Endothelial cell of umbilical vein (primary cell): ENCODE measurements at regions of chr17 and their contacts with region 1.

Region 1: GRCh38 chr17:17496189-17497064 is at the start of gene RASD1:
- DNase-seq: peak; percentile 77
- H3K4me3 ChIP-seq: peak within 1 kb of the TSS; percentile 39 to 74 (median 71)
- H3K27ac ChIP-seq: peak within 1 kb of the TSS; percentile 71
- H3K4me1 ChIP-seq: peaks cover 13% of the 10 kb centered on the region
- H3K27me3 ChIP-seq: no peaks in the 10 kb centered on the region
- CTCF ChIP-seq: peak; percentile 79 to 93
- POLR2A ChIP-seq: peak; percentile 91
- total RNA-seq, gene RASD1: 15.7 and 21.3 TPM in 2 replicates

Region 2: GRCh38 chr17:17401271-17401781 is 95.1 kb before region 1 on chr17:
- CTCF ChIA-PET with region 1: no interaction called
- POLR2A ChIA-PET with region 1: no interaction called
- dilution Hi-C with region 1: no loop called
- intact Hi-C with region 1: loop called (anchors 5 kb)
- DNase-seq: no peak
- H3K4me3 ChIP-seq: no peak overlapping the region
- H3K27ac ChIP-seq: no peak overlapping the region
- H3K4me1 ChIP-seq: peaks cover 24% of the 10 kb centered on the region
- H3K27me3 ChIP-seq: no peaks in the 10 kb centered on the region
- CTCF ChIP-seq: peak in 1 of 2 donors; percentile 3
- POLR2A ChIP-seq: no peak

Region 3: GRCh38 chr17:17445925-17446665 is 50.3 kb before region 1 on chr17:
- CTCF ChIA-PET with region 1: interaction called, 10 read pairs
- POLR2A ChIA-PET with region 1: interaction called, 9 read pairs
- dilution Hi-C with region 1: no loop called
- intact Hi-C with region 1: loop called (anchors 1 kb)
- DNase-seq: peak; percentile 96
- H3K4me3 ChIP-seq: no peak overlapping the region
- H3K27ac ChIP-seq: peak overlapping the region; percentile 90
- H3K4me1 ChIP-seq: peaks cover 26% of the 10 kb centered on the region
- H3K27me3 ChIP-seq: peaks cover 0 to 2% of the 10 kb centered on the region in 2 experiments
- CTCF ChIP-seq: peak in 1 of 2 donors; percentile 5
- POLR2A ChIP-seq: peak; percentile 42

Region 4: GRCh38 chr17:17506811-17507464 is 10.5 kb after region 1 on chr17:
- CTCF ChIA-PET with region 1: interaction called, 37 read pairs
- POLR2A ChIA-PET with region 1: interaction called, 3 read pairs
- dilution Hi-C with region 1: no loop called
- intact Hi-C with region 1: no loop called
- DNase-seq: no peak
- H3K4me3 ChIP-seq: no peak overlapping the region
- H3K27ac ChIP-seq: no peak overlapping the region
- H3K4me1 ChIP-seq: no peaks in the 10 kb centered on the region
- H3K27me3 ChIP-seq: no peaks in the 10 kb centered on the region
- CTCF ChIP-seq: no peak
- POLR2A ChIP-seq: no peak

Region 5: DNA sequence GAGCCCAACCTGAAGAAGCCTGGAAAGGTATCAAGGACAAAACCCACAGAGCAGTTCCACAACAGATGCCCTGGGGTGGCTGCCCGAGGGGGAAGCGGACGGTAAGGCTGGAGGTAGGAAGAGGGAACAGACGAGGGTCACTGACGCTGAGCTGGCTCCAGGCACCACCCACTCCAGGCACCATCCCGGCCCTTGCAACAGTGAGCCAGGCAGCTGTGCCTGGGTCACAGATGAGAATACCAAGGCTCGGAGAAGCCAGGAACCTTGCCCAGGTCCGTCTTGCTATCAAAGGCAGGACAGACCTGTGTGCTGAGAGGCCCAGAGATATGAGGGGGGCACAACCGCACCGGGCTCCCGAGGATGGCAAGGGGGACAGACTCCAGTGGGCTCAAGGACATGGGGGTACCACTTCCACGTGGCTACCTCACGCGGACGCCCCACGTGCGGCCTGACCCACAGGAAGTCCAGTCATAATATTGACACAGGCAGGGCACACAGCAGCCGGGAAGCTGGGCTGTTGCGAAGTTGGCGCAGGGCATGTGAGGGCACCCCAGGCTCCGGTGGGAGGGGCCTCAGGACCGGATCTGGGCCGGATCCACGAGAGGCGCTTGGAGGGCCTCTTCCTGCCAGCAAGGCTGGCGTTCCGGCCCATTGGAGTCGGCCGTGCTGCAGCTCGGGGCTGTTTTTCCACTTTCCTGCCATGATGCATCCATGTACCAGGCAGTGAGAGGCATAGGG is 65.2 kb after region 1 on chr17:
- CTCF ChIA-PET with region 1: interaction called, 20 read pairs
- POLR2A ChIA-PET with region 1: interaction called, 4 read pairs
- dilution Hi-C with region 1: no loop called
- intact Hi-C with region 1: no loop called
- DNase-seq: peak; percentile 67
- H3K4me3 ChIP-seq: no peak overlapping the region
- H3K27ac ChIP-seq: peak overlapping the region; percentile 65
- H3K4me1 ChIP-seq: peaks cover 11% of the 10 kb centered on the region
- H3K27me3 ChIP-seq: no peaks in the 10 kb centered on the region
- CTCF ChIP-seq: no peak
- POLR2A ChIP-seq: no peak

Region 6: GRCh38 chr17:17591355-17592298 is 95.2 kb after region 1 on chr17 and contains the start of gene PEMT:
- CTCF ChIA-PET with region 1: interaction called, 17 read pairs
- POLR2A ChIA-PET with region 1: interaction called, 11 read pairs
- dilution Hi-C with region 1: no loop called
- intact Hi-C with region 1: loop called (anchors 1 kb)
- DNase-seq: peak; percentile 98
- H3K4me3 ChIP-seq: peak within 1 kb of the TSS; percentile 92 to 96 (median 95)
- H3K27ac ChIP-seq: peak within 1 kb of the TSS; percentile 67
- H3K4me1 ChIP-seq: peaks cover 9% of the 10 kb centered on the region
- H3K27me3 ChIP-seq: no peaks in the 10 kb centered on the region
- CTCF ChIP-seq: no peak
- POLR2A ChIP-seq: peak; percentile 84
- total RNA-seq, gene PEMT: 35.1 and 37.2 TPM in 2 replicates

Region 7: DNA sequence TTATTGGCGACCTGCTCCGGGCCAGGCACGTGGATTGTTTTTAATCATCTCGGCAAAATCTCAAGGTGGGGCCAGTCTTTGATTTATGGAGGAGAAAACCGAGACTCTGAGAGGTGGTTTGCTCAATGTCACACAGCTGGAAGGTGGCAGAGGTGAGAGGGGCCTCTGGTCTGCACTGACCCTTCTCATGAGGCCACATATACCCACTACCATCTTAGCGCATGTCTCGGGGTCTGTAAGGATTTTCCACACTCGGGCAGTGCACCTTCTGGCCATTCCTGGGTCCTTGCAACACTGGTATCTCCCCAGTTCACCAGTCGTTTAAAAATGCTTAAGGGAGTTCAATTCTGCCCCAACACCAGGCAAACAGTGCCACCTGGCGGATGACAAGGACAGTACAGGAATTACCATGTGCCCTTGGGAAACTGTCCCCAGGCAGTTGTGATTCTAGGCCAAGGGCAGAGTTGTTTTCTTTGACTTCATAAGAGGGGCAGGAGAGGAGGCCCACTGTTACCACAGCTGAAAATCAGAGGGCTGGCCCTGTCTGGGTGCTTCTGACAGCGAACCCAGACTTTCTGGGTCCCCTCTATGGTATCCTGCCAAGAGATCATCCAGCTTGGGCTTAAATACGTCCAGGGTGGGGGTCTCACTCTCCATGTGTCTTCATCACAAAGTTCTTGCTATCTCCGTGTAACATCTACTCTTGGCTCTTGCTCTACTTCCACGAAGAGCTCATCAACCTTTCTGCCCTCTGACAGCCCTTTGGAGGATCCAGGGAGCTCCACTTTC is 145.4 kb after region 1 on chr17:
- CTCF ChIA-PET with region 1: interaction called, 77 read pairs
- POLR2A ChIA-PET with region 1: interaction called, 3 read pairs
- dilution Hi-C with region 1: no loop called
- intact Hi-C with region 1: loop called (anchors 1 kb)
- DNase-seq: peak; percentile 74
- H3K4me3 ChIP-seq: no peak overlapping the region
- H3K27ac ChIP-seq: no peak overlapping the region
- H3K4me1 ChIP-seq: no peaks in the 10 kb centered on the region
- H3K27me3 ChIP-seq: no peaks in the 10 kb centered on the region
- CTCF ChIP-seq: peak; percentile 82 to 85
- POLR2A ChIP-seq: no peak

Region 8: GRCh38 chr17:17900615-17901520 is 404.4 kb after region 1 on chr17:
- CTCF ChIA-PET with region 1: no interaction called
- POLR2A ChIA-PET with region 1: no interaction called
- dilution Hi-C with region 1: no loop called
- intact Hi-C with region 1: no loop called
- DNase-seq: peak; percentile 89
- H3K4me3 ChIP-seq: no peak overlapping the region
- H3K27ac ChIP-seq: no peak overlapping the region
- H3K4me1 ChIP-seq: peaks cover 17% of the 10 kb centered on the region
- H3K27me3 ChIP-seq: no peaks in the 10 kb centered on the region
- CTCF ChIP-seq: no peak
- POLR2A ChIP-seq: no peak